ENCODE measurements at regions of chr3 and their contacts with region 1.

Region 1: GRCh38 chr3:12663936-12664908 is at the start of gene RAF1:
- DNase-seq: peak; percentile 99
- ATAC-seq: peak; percentile 94
- H3K4me3 Mint-ChIP-seq: peak within 1 kb of the TSS; percentile 81
- H3K27ac Mint-ChIP-seq: peak within 1 kb of the TSS; percentile 96
- H3K4me1 Mint-ChIP-seq: peaks cover 25% of the 10 kb centered on the region
- H3K27me3 Mint-ChIP-seq: no peaks in the 10 kb centered on the region
- total RNA-seq, gene RAF1: 66.8 to 74.7 TPM

Region 2: GRCh38 chr3:11271986-11272904 is 1392.0 kb before region 1 on chr3 and contains the start of gene ATG7:
- CTCF ChIA-PET with region 1: no interaction called
- POLR2A ChIA-PET with region 1: no interaction called
- intact Hi-C with region 1: loop called in 1 of 2 experiments (anchors 1 kb)
- DNase-seq: peak; percentile 98
- ATAC-seq: peak; percentile 97
- H3K4me3 Mint-ChIP-seq: peak within 1 kb of the TSS; percentile 93
- H3K27ac Mint-ChIP-seq: peak within 1 kb of the TSS; percentile 94
- H3K4me1 Mint-ChIP-seq: peaks cover 45% of the 10 kb centered on the region
- H3K27me3 Mint-ChIP-seq: no peaks in the 10 kb centered on the region
- total RNA-seq, gene ATG7: 31.6 to 34.5 TPM

Region 3: DNA sequence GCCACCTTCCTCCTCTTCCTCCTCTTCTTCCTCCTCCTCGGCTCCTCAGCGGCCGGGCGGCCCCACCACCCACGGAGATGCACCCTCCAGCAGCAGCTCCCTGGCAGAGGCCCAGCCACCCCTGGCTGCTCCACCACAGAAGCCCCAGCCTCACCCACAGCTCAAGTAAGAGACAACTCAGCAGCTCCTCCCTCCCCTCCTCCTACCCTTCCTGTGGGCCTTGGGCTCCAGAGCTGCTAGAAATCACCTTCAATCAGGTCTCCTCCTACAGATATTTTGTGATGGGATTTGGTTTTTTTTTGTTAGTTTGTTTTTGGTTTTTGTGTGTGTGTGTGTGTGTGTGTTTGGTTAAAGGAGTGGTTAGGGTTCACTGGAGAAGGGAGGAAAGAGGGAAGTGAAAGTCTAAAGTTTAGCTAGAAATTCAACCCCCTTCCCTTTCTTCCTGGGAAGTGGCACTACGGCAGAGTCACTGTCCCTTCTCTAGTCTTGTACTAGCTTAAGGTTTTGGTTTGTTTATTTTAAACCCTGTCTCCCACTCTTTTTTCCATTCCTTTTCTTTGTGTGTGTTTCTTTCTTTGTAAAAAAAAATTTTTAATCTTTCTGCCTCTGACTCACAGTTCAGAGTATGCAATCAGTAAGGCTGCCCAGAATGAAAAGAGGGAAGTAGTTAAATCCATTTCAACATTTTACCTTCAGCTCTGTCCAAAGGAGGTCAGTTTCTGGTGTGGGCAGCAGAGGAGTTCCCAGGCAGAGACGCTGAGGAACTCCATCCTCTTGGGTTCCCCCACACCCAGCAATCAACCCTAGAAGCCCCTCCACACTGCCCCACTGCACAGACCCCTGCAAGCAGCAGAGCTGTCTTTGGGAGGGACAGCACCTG is 476.5 kb before region 1 on chr3:
- CTCF ChIA-PET with region 1: no interaction called
- POLR2A ChIA-PET with region 1: no interaction called
- intact Hi-C with region 1: loop called in 1 of 2 experiments (anchors 5 kb)
- DNase-seq: peak; percentile 90
- ATAC-seq: peak; percentile 92
- H3K4me3 Mint-ChIP-seq: peak overlapping the region; percentile 56
- H3K27ac Mint-ChIP-seq: peak overlapping the region; percentile 94
- H3K4me1 Mint-ChIP-seq: peaks cover 52% of the 10 kb centered on the region
- H3K27me3 Mint-ChIP-seq: peaks cover 5% of the 10 kb centered on the region

Region 4: GRCh38 chr3:12454076-12454815 is 210.0 kb before region 1 on chr3:
- CTCF ChIA-PET with region 1: no interaction called
- POLR2A ChIA-PET with region 1: no interaction called
- intact Hi-C with region 1: no loop called
- DNase-seq: no peak
- ATAC-seq: peak; percentile 60
- H3K4me3 Mint-ChIP-seq: no peak overlapping the region
- H3K27ac Mint-ChIP-seq: no peak overlapping the region
- H3K4me1 Mint-ChIP-seq: peaks cover 10% of the 10 kb centered on the region
- H3K27me3 Mint-ChIP-seq: no peaks in the 10 kb centered on the region

Region 5: DNA sequence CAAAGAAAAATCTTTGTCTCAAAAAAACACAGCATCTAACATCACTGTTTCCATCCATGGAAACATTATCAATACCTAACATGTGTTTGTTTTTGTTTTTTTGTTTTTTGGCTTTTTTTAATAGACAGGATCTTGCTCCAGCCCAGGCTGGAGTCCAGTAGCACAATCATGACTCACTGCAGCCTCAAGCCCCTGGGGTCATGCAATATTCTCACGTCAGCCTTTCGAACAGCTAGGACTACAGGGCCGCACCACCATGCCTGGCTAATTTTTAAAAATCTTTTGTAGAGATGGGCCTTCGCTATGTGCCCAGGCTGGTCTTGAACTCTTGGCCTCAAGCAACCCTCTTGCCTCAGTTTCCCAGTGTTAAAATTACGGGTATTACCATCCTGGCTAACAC is 53.1 kb before region 1 on chr3:
- CTCF ChIA-PET with region 1: interaction called, 3 read pairs
- POLR2A ChIA-PET with region 1: no interaction called
- intact Hi-C with region 1: loop called in 1 of 2 experiments (anchors 1 kb)
- DNase-seq: no peak
- ATAC-seq: no peak
- H3K4me3 Mint-ChIP-seq: no peak overlapping the region
- H3K27ac Mint-ChIP-seq: no peak overlapping the region
- H3K4me1 Mint-ChIP-seq: peaks cover 62% of the 10 kb centered on the region
- H3K27me3 Mint-ChIP-seq: no peaks in the 10 kb centered on the region

Region 6: DNA sequence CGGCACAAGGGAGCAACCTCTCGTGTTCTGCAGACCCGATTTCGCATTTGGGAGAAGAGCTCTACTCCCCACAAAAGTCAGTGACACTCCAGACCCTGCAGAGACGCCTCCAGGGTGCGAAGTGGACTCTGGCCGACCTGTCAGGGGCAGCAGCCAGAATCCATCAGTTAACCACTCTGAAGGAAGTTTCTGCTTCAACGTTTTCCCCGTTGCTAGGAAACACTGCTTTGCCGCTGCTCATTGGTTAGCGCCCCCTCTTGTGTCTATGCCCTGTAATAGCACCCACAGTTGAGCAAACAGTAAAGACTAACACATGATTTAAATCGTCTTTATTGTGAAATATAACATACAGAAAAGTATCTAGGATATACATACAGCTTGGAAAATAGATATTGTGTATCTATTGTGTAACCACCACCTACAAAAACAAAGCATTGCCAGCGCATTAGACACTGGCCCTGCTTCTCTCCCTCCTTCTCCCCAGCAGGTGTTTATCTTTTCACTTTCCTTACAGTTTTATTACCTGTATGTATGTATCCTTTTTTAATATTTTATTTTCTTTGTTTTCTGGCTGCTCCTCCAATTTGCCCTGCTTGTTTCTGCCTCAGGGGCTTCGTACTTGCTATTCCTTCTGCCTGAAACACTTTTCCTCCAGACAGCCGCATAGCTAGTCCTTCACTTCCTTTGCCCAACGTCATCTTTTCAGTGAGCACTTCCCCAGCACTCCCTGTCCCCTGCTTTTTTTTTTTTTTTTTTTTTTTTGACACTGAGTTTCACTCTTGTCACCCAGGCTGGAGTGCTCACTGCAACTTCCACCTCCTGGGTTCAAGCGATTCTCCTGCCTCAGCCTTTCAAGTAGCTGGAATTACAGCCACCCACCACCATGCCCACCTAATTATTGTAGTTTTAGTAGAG is 56.0 kb after region 1 on chr3:
- CTCF ChIA-PET with region 1: interaction called, 6 read pairs
- POLR2A ChIA-PET with region 1: no interaction called
- intact Hi-C with region 1: loop called in 1 of 2 experiments (anchors 1 kb)
- DNase-seq: peak; percentile 80
- ATAC-seq: peak; percentile 74
- H3K4me3 Mint-ChIP-seq: peak overlapping the region; percentile 36
- H3K27ac Mint-ChIP-seq: no peak overlapping the region
- H3K4me1 Mint-ChIP-seq: peaks cover 9% of the 10 kb centered on the region
- H3K27me3 Mint-ChIP-seq: no peaks in the 10 kb centered on the region

Region 7: DNA sequence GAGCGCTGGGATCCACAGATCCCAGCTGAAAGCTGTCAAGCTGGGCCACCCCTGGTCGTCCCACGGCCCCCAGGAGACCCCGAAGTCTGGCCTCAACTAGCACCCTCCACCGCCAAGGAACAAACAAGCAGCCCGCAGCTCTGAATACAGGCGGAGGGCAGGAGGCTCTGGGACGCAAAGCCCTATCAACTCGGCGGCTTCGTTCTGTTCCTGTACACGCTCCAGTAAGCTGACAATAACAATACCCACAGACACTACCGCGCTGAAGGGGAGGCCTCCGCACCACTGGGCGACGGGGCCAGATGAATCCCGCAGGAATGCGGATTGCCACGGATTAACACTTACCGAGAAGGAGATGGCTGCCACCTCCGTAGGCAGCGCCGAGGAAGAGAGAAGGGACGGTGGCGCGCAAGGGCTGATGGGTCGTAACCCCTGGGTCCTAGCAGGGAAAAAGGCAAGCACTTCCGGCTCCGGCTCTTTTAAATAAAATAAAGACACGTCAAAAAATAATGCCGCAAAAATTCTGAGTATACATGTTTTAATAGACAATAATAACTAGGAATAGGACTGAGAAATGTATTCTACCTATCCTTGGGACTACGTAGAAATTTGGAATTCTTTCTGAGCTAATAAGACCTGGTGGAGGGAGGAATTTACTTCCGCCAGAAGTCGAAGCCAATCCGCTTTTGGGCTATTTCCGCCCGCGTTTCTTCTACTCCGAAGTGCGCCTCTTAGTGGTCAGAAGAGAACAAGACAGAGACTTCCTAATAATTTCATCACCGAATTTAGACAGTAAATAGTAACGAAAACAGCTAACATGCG is 177.1 kb after region 1 on chr3 and contains the start of gene RPL32:
- CTCF ChIA-PET with region 1: interaction called, 4 read pairs
- POLR2A ChIA-PET with region 1: no interaction called
- intact Hi-C with region 1: loop called (anchors 1 to 2 kb)
- DNase-seq: peak; percentile 92
- ATAC-seq: peak; percentile 90
- H3K4me3 Mint-ChIP-seq: peak within 1 kb of the TSS; percentile 98
- H3K27ac Mint-ChIP-seq: peak within 1 kb of the TSS; percentile 99
- H3K4me1 Mint-ChIP-seq: peaks cover 43% of the 10 kb centered on the region
- H3K27me3 Mint-ChIP-seq: no peaks in the 10 kb centered on the region
- total RNA-seq, gene RPL32: 2,842 to 4,727 TPM

Region 8: DNA sequence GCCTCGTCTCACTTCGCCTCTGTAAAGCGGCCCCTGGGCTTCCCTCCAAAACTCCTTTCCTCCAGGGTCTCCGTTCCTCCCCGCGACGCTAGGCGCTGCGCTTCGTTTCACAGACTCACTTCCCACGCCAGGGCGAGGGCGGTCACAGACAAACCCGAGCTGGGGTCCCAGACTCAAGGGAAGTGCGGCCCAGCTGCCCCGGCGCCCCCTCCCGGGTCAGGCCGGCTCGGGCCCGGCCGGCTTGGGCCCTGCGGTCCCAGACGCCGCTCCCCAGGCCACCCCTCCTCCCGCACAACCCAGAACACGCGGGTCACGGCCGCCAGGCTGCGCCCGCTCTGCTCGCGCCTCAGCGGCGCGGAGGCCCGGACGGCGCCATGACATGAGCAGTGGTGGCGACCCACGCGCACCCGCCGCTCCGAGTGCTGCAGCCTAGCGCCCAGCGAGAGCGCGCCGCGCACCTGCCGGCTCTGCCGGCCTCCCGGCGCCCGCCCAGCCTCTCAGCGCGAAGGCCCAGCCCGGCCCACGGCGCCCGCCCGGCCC is 755.4 kb after region 1 on chr3:
- CTCF ChIA-PET with region 1: no interaction called
- POLR2A ChIA-PET with region 1: no interaction called
- intact Hi-C with region 1: loop called in 1 of 2 experiments (anchors 5 kb)
- DNase-seq: peak; percentile 79
- ATAC-seq: peak; percentile 30
- H3K4me3 Mint-ChIP-seq: peak overlapping the region; percentile 77
- H3K27ac Mint-ChIP-seq: peak overlapping the region; percentile 95
- H3K4me1 Mint-ChIP-seq: peaks cover 58% of the 10 kb centered on the region
- H3K27me3 Mint-ChIP-seq: no peaks in the 10 kb centered on the region

Measured in activated CD4-positive, alpha-beta T cell treated with anti-CD3 and anti-CD28 coated beads for 36 hours (primary cell).